ENCODE measurements at regions of chr15 and their contacts with region 1.

Region 1: DNA sequence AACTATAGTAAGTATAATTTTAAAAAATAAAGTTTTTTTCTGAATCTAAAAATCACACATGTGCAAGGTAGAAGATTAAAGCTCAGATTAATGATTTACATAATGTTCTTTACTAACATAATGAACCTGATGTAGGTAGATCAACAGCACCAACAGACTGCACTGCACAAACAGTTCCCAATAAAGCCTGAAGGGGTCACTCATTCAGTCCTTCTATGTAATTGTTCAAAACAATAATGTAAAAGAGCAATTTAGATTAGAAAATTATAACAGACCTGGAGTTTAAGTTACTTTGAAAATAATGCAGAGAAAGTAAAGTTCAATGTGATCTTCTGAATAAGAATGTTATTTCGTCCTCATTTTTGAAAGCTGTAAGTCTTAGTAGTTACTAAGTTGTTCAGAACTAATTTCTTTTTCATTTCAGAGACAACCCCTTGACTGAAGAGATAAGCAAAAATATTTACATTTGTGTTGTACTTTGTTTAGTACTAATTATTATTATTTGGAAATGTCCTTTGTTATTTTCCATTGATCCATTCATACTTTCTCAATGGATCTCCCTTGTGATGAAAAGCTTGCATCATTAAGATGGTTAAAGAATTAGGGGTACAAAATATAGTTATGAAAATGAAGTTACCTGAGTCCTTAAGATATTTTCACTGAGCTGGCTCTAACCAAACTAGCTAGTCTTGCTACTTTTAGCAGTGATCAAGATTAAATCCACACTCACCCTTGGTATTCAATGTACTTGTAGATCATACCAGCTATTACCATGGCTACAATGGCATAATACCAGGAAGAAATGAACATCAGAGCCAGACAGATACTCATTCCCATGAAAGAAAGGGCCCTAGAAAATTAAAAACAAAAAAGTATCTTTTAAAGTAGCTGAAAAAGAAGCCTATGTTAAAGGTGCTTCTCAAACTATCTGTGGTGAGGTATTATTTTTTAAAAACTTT is 16.8 kb downstream of the EMC4 start:
- DNase-seq: peak; percentile 70
- ATAC-seq: peak; percentile 80
- H3K4me3 ChIP-seq: no peak overlapping the region
- H3K4me3 Mint-ChIP-seq: no peak overlapping the region
- H3K27ac ChIP-seq: no peak overlapping the region
- H3K27ac Mint-ChIP-seq: no peak overlapping the region
- H3K4me1 ChIP-seq: no peaks in the 10 kb centered on the region
- H3K4me1 Mint-ChIP-seq: no peaks in the 10 kb centered on the region
- H3K27me3 ChIP-seq: no peaks in the 10 kb centered on the region
- H3K27me3 Mint-ChIP-seq: no peaks in the 10 kb centered on the region
- CTCF ChIP-seq: peak; percentile 96

Region 2: GRCh38 chr15:34223904-34224596 is 17.6 kb before region 1 on chr15:
- CTCF ChIA-PET with region 1: interaction called, 13 read pairs
- POLR2A ChIA-PET with region 1: no interaction called
- intact Hi-C with region 1: no loop called
- DNase-seq: no peak
- ATAC-seq: no peak
- H3K4me3 ChIP-seq: peak overlapping the region; percentile 77 to 98 (median 82)
- H3K4me3 Mint-ChIP-seq: peak overlapping the region; percentile 94
- H3K27ac ChIP-seq: peak overlapping the region; percentile 77 to 90
- H3K27ac Mint-ChIP-seq: peak overlapping the region; percentile 98
- H3K4me1 ChIP-seq: peaks cover 8 to 16% of the 10 kb centered on the region in 2 donors
- H3K4me1 Mint-ChIP-seq: peaks cover 26% of the 10 kb centered on the region
- H3K27me3 ChIP-seq: no peaks in the 10 kb centered on the region
- H3K27me3 Mint-ChIP-seq: no peaks in the 10 kb centered on the region
- CTCF ChIP-seq: no peak

Region 3: GRCh38 chr15:34342737-34343575 is 101.3 kb after region 1 on chr15 and contains the starts of genes NOP10 and NUTM1:
- CTCF ChIA-PET with region 1: interaction called, 16 read pairs
- POLR2A ChIA-PET with region 1: no interaction called
- intact Hi-C with region 1: loop called (anchors 2 kb)
- DNase-seq: peak; percentile 93
- ATAC-seq: peak; percentile 85
- H3K4me3 ChIP-seq: peak within 1 kb of the TSS; percentile 94 to 99 (median 98)
- H3K4me3 Mint-ChIP-seq: peak within 1 kb of the TSS; percentile 85
- H3K27ac ChIP-seq: peak within 1 kb of the TSS; percentile 79 to 81
- H3K27ac Mint-ChIP-seq: peak within 1 kb of the TSS; percentile 63
- H3K4me1 ChIP-seq: peaks cover 16 to 18% of the 10 kb centered on the region in 2 donors
- H3K4me1 Mint-ChIP-seq: peaks cover 20% of the 10 kb centered on the region
- H3K27me3 ChIP-seq: no peaks in the 10 kb centered on the region
- H3K27me3 Mint-ChIP-seq: no peaks in the 10 kb centered on the region
- CTCF ChIP-seq: peak; percentile 97
- total RNA-seq, gene NOP10: 65.6 and 68.2 TPM in 2 replicates
- total RNA-seq, gene NUTM1: not detected in 2 replicates

Measured in B cell (primary cell).